GM12878 (cell line): ENCODE measurements at regions of chr7 and their contacts with region 1.

Region 1: GRCh38 chr7:81664304-81664703 is 105.5 kb downstream of the HGF start:
- DNase-seq: no peak
- ATAC-seq: no peak
- H3K4me3 ChIP-seq: no peak overlapping the region
- H3K27ac ChIP-seq: no peak overlapping the region
- H3K4me1 ChIP-seq: no peaks in the 10 kb centered on the region
- H3K27me3 ChIP-seq: no peaks in the 10 kb centered on the region
- CTCF ChIP-seq: no peak
- EP300 ChIP-seq: no peak
- POLR2A ChIP-seq: no peak
- RAD21 ChIP-seq: no peak

Region 2: GRCh38 chr7:81676813-81677212 is 12.5 kb after region 1 on chr7:
- CTCF ChIA-PET with region 1: interaction called, 12 read pairs
- POLR2A ChIA-PET with region 1: no interaction called
- RAD21 ChIA-PET with region 1: interaction called, 7 read pairs
- SMC1A ChIA-PET with region 1: interaction called, 8 read pairs
- in situ Hi-C with region 1: no loop called
- intact Hi-C with region 1: no loop called
- DNase-seq: no peak
- ATAC-seq: peak; percentile 70
- H3K4me3 ChIP-seq: no peak overlapping the region
- H3K27ac ChIP-seq: no peak overlapping the region
- H3K4me1 ChIP-seq: peaks cover 5% of the 10 kb centered on the region; the same call in 1 of the 2 replicates
- H3K27me3 ChIP-seq: no peaks in the 10 kb centered on the region
- CTCF ChIP-seq: no peak
- EP300 ChIP-seq: no peak
- POLR2A ChIP-seq: no peak
- RAD21 ChIP-seq: no peak